ENCODE measurements at regions of chr2 and their contacts with region 1.

Region 1: GRCh38 chr2:172465417-172466334 is 38.3 kb downstream of the ITGA6 start:
- DNase-seq: peak; percentile 67
- H3K4me3 ChIP-seq: peak overlapping the region; percentile 36 to 41; a peak in 3 of 4 replicates
- H3K27ac ChIP-seq: peak overlapping the region in 1 of 2 experiments; percentile 42; a peak in 1 of 4 replicates
- H3K4me1 ChIP-seq: peaks cover 0 to 6% of the 10 kb centered on the region in 2 experiments; a peak in 3 of 4 replicates
- H3K27me3 ChIP-seq: no peaks in the 10 kb centered on the region
- CTCF ChIP-seq: peak; percentile 96
- EP300 ChIP-seq: no peak
- RAD21 ChIP-seq: peak; percentile 97

Region 2: GRCh38 chr2:172102391-172103278 is 363.0 kb before region 1 on chr2 and contains the start of gene DLX2:
- CTCF ChIA-PET with region 1: interaction called, 27 read pairs
- POLR2A ChIA-PET with region 1: no interaction called
- DNase-seq: peak; percentile 94
- H3K4me3 ChIP-seq: peak within 1 kb of the TSS; percentile 51 to 64
- H3K27ac ChIP-seq: no peak within 1 kb of the TSS
- H3K4me1 ChIP-seq: peaks cover 10 to 31% of the 10 kb centered on the region in 2 experiments
- H3K27me3 ChIP-seq: peaks cover 22% of the 10 kb centered on the region; the same call in 1 of the 2 replicates
- CTCF ChIP-seq: no peak
- EP300 ChIP-seq: no peak
- RAD21 ChIP-seq: no peak
- polyA plus RNA-seq, gene DLX2: 0.02 TPM in 2 replicates

Region 3: GRCh38 chr2:172172513-172173173 is 293.0 kb before region 1 on chr2:
- CTCF ChIA-PET with region 1: interaction called, 346 read pairs
- POLR2A ChIA-PET with region 1: interaction called, 4 read pairs
- DNase-seq: peak; percentile 91
- H3K4me3 ChIP-seq: peak overlapping the region; percentile 61 to 67
- H3K27ac ChIP-seq: no peak overlapping the region
- H3K4me1 ChIP-seq: peaks cover 0 to 3% of the 10 kb centered on the region in 2 experiments; a peak in 1 of 4 replicates
- H3K27me3 ChIP-seq: no peaks in the 10 kb centered on the region
- CTCF ChIP-seq: peak; percentile 81
- EP300 ChIP-seq: no peak
- RAD21 ChIP-seq: peak; percentile 88

Region 4: DNA sequence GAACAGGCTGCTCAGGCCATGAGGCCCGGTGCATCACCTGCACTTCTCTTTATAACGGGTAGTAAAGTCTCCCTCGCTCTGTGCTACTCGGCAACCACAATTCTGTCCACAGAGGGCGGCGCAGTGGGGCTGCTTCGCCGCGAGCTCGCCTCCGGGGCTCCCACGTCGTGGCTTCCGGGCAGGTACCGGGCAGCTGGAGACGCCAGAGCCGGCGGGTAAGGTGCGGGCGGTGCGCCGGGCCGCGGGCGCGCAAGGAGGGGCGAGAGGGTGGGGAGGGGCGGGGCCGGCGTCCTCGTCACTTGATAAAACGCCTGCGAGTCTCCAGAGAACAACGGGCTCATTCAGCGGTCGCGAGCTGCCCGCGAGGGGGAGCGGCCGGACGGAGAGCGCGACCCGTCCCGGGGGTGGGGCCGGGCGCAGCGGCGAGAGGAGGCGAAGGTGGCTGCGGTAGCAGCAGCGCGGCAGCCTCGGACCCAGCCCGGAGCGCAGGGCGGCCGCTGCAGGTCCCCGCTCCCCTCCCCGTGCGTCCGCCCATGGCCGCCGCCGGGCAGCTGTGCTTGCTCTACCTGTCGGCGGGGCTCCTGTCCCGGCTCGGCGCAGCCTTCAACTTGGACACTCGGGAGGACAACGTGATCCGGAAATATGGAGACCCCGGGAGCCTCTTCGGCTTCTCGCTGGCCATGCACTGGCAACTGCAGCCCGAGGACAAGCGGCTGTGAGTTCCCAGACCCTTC is 38.3 kb before region 1 on chr2 and contains the start of gene ITGA6:
- CTCF ChIA-PET with region 1: interaction called, 30 read pairs
- POLR2A ChIA-PET with region 1: no interaction called
- DNase-seq: peak; percentile 87
- H3K4me3 ChIP-seq: peak within 1 kb of the TSS; percentile 85 to 88
- H3K27ac ChIP-seq: peak within 1 kb of the TSS; percentile 22 to 27; a peak in 1 of 4 replicates
- H3K4me1 ChIP-seq: peaks cover 7 to 18% of the 10 kb centered on the region in 2 experiments; a peak in 2 of 4 replicates
- H3K27me3 ChIP-seq: no peaks in the 10 kb centered on the region
- CTCF ChIP-seq: no peak
- EP300 ChIP-seq: peak in 1 of 2 experiments; percentile 20; a peak in 1 of 4 replicates
- RAD21 ChIP-seq: no peak
- polyA plus RNA-seq, gene ITGA6: 25.9 and 26.0 TPM in 2 replicates

Region 5: GRCh38 chr2:172478353-172478752 is 12.7 kb after region 1 on chr2:
- CTCF ChIA-PET with region 1: interaction called, 64 read pairs
- POLR2A ChIA-PET with region 1: no interaction called
- DNase-seq: no peak
- H3K4me3 ChIP-seq: no peak overlapping the region
- H3K27ac ChIP-seq: no peak overlapping the region
- H3K4me1 ChIP-seq: 0 out of 4 replicates have a peak, but pooled peaks cover 0 to 6% of the 10 kb centered on the region in 2 experiments
- H3K27me3 ChIP-seq: no peaks in the 10 kb centered on the region
- CTCF ChIP-seq: no peak
- EP300 ChIP-seq: no peak
- RAD21 ChIP-seq: no peak

Region 6: DNA sequence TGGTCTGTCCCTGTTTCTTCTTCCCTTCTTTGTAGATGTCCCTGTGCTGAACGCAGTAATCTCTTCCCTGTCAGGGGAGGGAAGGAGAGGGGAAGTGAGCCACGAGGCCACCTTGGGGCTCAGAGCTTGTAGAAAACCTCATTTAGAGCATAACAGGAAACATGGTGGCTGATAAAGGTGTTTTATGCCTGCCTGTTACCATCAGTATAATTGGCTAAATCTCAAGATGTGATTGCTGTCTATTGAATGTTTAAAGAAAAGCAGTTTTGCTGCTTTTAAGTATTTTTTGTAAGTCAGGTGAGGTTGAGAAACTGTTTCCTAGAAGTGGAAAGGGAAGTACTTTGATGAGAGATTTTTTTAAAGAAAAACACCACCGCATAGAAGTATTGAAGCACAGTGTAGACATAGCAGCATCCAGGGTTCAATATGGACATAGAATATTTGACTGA is 30.5 kb after region 1 on chr2:
- CTCF ChIA-PET with region 1: interaction called, 12 read pairs
- POLR2A ChIA-PET with region 1: no interaction called
- DNase-seq: no peak
- H3K4me3 ChIP-seq: no peak overlapping the region
- H3K27ac ChIP-seq: no peak overlapping the region
- H3K4me1 ChIP-seq: no peaks in the 10 kb centered on the region
- H3K27me3 ChIP-seq: no peaks in the 10 kb centered on the region
- CTCF ChIP-seq: no peak
- EP300 ChIP-seq: no peak
- RAD21 ChIP-seq: no peak

Region 7: GRCh38 chr2:172525606-172526005 is 59.9 kb after region 1 on chr2:
- CTCF ChIA-PET with region 1: no interaction called
- POLR2A ChIA-PET with region 1: no interaction called
- DNase-seq: no peak
- H3K4me3 ChIP-seq: no peak overlapping the region
- H3K27ac ChIP-seq: no peak overlapping the region
- H3K4me1 ChIP-seq: no peaks in the 10 kb centered on the region
- H3K27me3 ChIP-seq: no peaks in the 10 kb centered on the region
- CTCF ChIP-seq: no peak
- EP300 ChIP-seq: no peak
- RAD21 ChIP-seq: no peak

Region 8: GRCh38 chr2:172735582-172736423 is 270.1 kb after region 1 on chr2 and contains the start of gene RAPGEF4:
- CTCF ChIA-PET with region 1: no interaction called
- POLR2A ChIA-PET with region 1: no interaction called
- DNase-seq: peak; percentile 89
- H3K4me3 ChIP-seq: peak within 1 kb of the TSS; percentile 56 to 57
- H3K27ac ChIP-seq: no peak within 1 kb of the TSS
- H3K4me1 ChIP-seq: peaks cover 0 to 6% of the 10 kb centered on the region in 2 experiments; a peak in 2 of 4 replicates
- H3K27me3 ChIP-seq: peaks cover 19% of the 10 kb centered on the region
- CTCF ChIP-seq: no peak
- EP300 ChIP-seq: no peak
- RAD21 ChIP-seq: no peak
- polyA plus RNA-seq, gene RAPGEF4: 0.30 and 1.2 TPM in 2 replicates